Esophagus squamous epithelium (tissue), 5 donors: ENCODE measurements at regions of chr10 and their contacts with region 1.

Region 1: DNA sequence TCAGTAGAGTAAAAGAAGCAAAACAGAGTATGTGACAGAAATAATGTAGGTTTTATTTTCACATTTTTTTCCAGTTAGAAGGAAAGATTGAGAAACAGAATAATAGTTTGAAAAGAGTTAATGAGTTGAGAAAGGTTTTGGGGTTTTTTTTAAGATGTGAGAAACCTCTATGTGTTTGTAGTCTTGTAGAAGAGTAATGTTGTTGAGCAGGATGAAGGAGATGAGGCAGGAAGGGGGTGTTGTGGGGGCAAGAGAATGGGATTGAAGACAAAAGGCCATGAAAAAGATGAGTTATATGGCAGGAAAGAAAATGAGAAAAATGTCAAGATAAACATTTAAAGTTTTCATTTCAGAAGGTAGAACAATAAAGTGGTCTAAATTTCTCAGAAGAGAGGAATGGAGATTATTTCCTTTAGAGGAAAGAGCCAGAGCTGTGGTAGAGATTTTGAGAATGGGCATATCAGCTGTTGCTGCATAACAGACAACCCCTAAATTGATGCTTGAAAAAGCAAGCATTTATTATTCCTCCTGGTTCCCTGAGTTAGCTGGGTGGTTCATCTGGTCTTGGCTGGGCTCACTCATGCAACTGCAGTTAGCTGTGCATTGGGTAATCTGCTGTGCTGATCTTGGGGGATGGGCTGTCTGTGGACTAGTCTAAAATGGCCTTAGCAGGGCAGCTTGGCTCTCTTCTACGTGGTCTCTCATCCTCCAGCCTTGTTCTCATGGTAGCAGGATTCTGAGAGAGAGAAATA is 27.1 kb downstream of the PCGF5 start:
- DNase-seq: no peak
- H3K4me3 ChIP-seq: no peak overlapping the region
- H3K27ac ChIP-seq: no peak overlapping the region
- H3K4me1 ChIP-seq: peaks cover 0 to 3% (median 0%) of the 10 kb centered on the region in 3 donors
- H3K27me3 ChIP-seq: no peaks in the 10 kb centered on the region
- CTCF ChIP-seq: no peak
- POLR2A ChIP-seq: no peak

Region 2: DNA sequence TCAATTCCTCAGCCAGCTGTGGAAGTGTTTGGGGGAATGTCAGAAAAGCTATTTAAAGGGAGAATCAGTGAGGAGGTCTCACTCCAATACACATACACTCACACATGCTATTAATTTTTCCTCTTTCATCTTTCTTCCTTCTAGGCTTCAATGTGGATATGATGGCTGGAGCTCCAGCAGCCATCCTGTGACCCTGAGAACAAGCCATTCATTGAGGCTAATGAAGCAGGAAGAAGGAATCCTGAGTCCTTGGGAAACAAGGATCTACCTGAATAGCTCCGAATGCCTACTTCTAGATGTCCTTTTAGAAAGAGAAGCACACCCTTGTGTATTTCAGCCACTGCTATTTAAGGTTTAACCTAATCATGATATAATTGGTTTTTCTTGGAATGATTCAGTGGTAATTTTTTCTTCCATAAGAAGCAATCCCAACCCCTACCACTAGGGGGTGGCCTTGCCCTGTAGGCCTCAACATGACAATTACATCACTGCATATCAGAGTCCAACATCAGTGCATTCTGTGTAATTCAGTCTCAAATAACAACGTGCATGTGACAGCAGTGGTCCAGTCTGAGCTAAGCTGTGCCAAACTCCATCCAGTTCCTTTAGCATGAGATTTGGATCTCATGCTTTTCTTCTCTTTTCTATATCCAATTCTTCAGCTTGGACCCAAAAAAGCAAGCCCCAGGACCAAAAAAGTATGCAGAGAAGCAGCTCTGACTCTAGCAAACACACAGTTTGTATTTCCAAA is 241.4 kb before region 1 on chr10:
- intact Hi-C with region 1: loop called (anchors 5 kb)
- DNase-seq: peak; percentile 5
- H3K4me3 ChIP-seq: no peak overlapping the region
- H3K27ac ChIP-seq: peak overlapping the region in 1 of 4 donors; percentile 25
- H3K4me1 ChIP-seq: peaks cover 0 to 4% (median 0%) of the 10 kb centered on the region in 3 donors
- H3K27me3 ChIP-seq: no peaks in the 10 kb centered on the region
- CTCF ChIP-seq: peak; percentile 86 to 97 (median 90)
- POLR2A ChIP-seq: no peak